T-cell (primary cell): ENCODE measurements at regions of chr5 and their contacts with region 1.

Region 1: DNA sequence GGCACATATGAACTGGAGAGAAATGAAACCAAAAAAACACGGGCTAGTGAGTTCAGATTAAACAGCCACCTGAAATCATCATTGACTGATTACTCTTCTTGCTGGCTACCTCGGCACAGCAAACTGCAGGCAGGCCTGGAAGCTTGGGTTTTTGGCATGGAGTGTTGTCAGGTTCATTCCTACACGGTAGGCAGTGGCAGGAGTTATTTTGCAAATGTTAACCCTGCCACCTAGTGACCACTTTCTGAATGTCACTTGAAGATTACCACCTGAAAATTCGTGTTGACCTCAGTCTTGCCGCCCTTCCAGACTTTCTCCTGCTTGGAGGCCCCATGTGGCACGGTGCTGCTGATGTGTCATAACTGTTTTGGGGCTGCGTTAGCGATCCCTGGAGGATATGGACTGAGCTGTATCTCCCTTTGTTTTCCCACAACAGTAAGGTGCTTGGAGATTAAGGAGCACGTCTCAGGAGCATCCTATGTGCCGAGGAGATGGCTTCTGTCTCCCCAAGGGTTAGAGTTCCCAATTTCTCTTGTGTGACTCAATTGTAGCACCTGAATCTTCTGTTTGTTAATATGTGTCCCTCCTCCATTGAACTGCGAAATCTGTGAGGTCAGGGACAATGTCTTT is 12.7 kb upstream of the CD180 start:
- DNase-seq: peak; percentile 7 to 87 (median 48)
- ATAC-seq: peak; percentile 41 to 50 (median 46)
- H3K4me3 ChIP-seq: no peak overlapping the region
- H3K4me3 Mint-ChIP-seq: no peak overlapping the region
- H3K27ac ChIP-seq: peak overlapping the region; percentile 18
- H3K27ac Mint-ChIP-seq: peak overlapping the region; percentile 84 to 85
- H3K4me1 ChIP-seq: peaks cover 45 to 46% of the 10 kb centered on the region in 2 experiments
- H3K4me1 Mint-ChIP-seq: peaks cover 58 to 66% (median 62%) of the 10 kb centered on the region in 3 donors
- H3K27me3 ChIP-seq: no peaks in the 10 kb centered on the region
- H3K27me3 Mint-ChIP-seq: no peaks in the 10 kb centered on the region

Region 2: GRCh38 chr5:66958980-66959641 is 250.1 kb before region 1 on chr5:
- CTCF ChIA-PET with region 1: no interaction called
- POLR2A ChIA-PET with region 1: no interaction called
- DNase-seq: no peak
- ATAC-seq: no peak
- H3K4me3 ChIP-seq: no peak overlapping the region
- H3K4me3 Mint-ChIP-seq: no peak overlapping the region
- H3K27ac ChIP-seq: no peak overlapping the region
- H3K27ac Mint-ChIP-seq: no peak overlapping the region
- H3K4me1 ChIP-seq: no peaks in the 10 kb centered on the region
- H3K4me1 Mint-ChIP-seq: no peaks in the 10 kb centered on the region
- H3K27me3 ChIP-seq: peaks cover 0 to 2% of the 10 kb centered on the region in 2 experiments
- H3K27me3 Mint-ChIP-seq: peaks cover 8% of the 10 kb centered on the region in 2 donors

Region 3: DNA sequence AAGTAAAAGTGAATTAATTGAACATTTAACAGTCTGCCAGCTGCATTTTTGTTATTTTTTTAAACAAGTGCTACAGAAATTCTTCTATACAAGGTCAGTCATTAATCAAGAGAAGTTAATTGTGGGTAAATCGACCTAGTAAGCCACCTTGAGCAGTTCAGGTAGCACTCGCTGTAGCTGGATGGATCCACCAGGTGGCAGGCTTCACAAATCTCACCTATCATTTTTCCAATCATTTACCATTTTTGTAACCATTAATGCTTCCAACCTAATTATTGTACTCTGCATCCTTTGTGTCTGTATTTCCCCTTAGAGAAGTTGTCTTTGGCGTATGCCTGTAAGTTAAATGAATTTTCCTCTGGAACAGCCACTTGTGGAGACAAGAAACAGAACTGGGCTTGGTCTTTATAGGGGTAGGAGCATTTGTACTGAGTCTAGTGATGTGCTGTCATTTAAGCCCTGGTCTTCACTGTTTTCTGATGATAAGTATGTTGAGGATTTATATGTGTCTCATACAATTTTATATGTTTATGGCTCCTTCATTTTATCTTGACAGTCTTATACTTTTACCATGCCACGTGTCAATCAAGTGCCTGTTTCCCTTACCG is 52.2 kb before region 1 on chr5:
- CTCF ChIA-PET with region 1: interaction called, 27 to 44 read pairs
- POLR2A ChIA-PET with region 1: interaction called, 7 read pairs
- DNase-seq: peak in 32 of 35 experiments; percentile 13 to 78 (median 47)
- ATAC-seq: peak in 3 of 4 experiments; percentile 33 to 61 (median 44)
- H3K4me3 ChIP-seq: no peak overlapping the region
- H3K4me3 Mint-ChIP-seq: peak overlapping the region in 1 of 3 donors; percentile 67
- H3K27ac ChIP-seq: peak overlapping the region; percentile 12
- H3K27ac Mint-ChIP-seq: peak overlapping the region; percentile 84 to 87
- H3K4me1 ChIP-seq: peaks cover 28 to 30% of the 10 kb centered on the region in 2 experiments
- H3K4me1 Mint-ChIP-seq: peaks cover 52 to 58% (median 54%) of the 10 kb centered on the region in 3 donors
- H3K27me3 ChIP-seq: no peaks in the 10 kb centered on the region
- H3K27me3 Mint-ChIP-seq: no peaks in the 10 kb centered on the region

Region 4: DNA sequence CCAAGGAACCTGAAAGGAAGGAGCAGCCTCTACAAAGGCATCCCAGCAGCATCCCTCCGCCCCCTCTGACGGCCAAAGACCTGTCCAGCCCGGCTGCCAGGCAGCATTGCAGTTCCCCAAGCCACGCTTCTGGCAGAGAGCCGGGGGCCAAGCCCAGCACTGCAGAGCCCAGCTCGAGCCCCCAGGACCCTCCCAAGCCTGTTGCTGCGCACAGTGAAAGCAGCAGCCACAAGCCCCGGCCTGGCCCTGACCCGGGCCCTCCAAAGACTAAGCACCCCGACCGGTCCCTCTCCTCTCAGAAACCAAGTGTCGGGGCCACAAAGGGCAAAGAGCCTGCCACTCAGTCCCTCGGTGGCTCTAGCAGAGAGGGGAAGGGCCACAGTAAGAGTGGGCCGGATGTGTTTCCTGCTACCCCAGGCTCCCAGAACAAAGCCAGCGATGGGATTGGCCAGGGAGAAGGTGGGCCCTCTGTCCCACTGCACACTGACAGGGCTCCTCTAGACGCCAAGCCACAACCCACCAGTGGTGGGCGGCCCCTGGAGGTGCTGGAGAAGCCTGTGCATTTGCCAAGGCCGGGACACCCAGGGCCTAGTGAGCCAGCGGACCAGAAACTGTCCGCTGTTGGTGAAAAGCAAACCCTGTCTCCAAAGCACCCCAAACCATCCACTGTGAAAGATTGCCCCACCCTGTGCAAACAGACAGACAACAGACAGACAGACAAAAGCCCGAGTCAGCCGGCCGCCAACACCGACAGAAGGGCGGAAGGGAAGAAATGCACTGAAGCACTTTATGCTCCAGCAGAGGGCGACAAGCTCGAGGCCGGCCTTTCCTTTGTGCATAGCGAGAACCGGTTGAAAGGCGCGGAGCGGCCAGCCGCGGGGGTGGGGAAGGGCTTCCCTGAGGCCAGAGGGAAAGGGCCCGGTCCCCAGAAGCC is 43.5 kb before region 1 on chr5:
- CTCF ChIA-PET with region 1: interaction called, 35 to 119 read pairs
- POLR2A ChIA-PET with region 1: interaction called, 7 read pairs
- DNase-seq: peak; percentile 65 to 87 (median 76)
- ATAC-seq: peak; percentile 72 to 84 (median 74)
- H3K4me3 ChIP-seq: peak overlapping the region; percentile 56 to 72
- H3K4me3 Mint-ChIP-seq: peak overlapping the region; percentile 81 to 87 (median 84)
- H3K27ac ChIP-seq: peak overlapping the region; percentile 95
- H3K27ac Mint-ChIP-seq: peak overlapping the region; percentile 99
- H3K4me1 ChIP-seq: peaks cover 36 to 58% of the 10 kb centered on the region in 2 experiments
- H3K4me1 Mint-ChIP-seq: peaks cover 64 to 79% (median 67%) of the 10 kb centered on the region in 3 donors
- H3K27me3 ChIP-seq: no peaks in the 10 kb centered on the region
- H3K27me3 Mint-ChIP-seq: no peaks in the 10 kb centered on the region

Region 5: GRCh38 chr5:67416133-67416937 is 207.1 kb after region 1 on chr5:
- CTCF ChIA-PET with region 1: no interaction called
- POLR2A ChIA-PET with region 1: no interaction called
- DNase-seq: peak in 22 of 35 experiments; percentile 0 to 48 (median 4)
- ATAC-seq: peak in 2 of 4 experiments; percentile 26 to 84
- H3K4me3 ChIP-seq: no peak overlapping the region
- H3K4me3 Mint-ChIP-seq: no peak overlapping the region
- H3K27ac ChIP-seq: no peak overlapping the region
- H3K27ac Mint-ChIP-seq: no peak overlapping the region
- H3K4me1 ChIP-seq: peaks cover 0 to 3% of the 10 kb centered on the region in 2 experiments
- H3K4me1 Mint-ChIP-seq: peaks cover 11 to 15% (median 12%) of the 10 kb centered on the region in 3 donors
- H3K27me3 ChIP-seq: no peaks in the 10 kb centered on the region
- H3K27me3 Mint-ChIP-seq: no peaks in the 10 kb centered on the region